ENCODE measurements at regions of chr6 and their contacts with region 1.

Region 1: DNA sequence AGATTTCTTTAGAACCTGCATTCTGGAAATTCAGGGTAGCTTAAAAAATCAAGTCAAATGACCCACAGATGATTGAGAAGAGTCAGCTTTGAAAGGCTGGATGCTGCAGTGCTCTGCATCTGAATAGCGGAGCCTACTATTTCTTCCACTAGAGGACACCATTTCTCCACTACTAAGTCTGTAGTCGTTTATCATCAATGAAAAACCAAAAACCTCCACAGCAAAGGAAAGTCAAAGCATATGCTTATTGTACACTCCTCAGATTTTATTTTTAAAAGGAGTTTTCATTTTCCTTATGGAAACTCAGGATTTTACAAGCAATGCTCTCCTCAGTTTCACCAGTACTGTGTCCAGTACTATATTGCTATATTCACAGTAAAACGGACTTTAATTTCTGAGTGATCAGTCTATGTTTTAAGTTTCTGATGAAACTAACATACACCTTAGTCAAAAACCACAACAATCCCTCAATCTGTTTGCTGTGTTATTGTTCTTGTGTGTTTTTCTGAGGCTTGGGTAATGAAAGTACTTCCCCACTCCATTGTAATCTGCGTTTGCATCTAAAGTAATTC is 50.5 kb upstream of the ENPP5 start:
- DNase-seq: peak; percentile 43
- H3K4me3 ChIP-seq: no peak overlapping the region
- H3K27ac ChIP-seq: no peak overlapping the region
- H3K4me1 ChIP-seq: no peaks in the 10 kb centered on the region
- H3K27me3 ChIP-seq: peaks cover 3 to 13% of the 10 kb centered on the region in 2 experiments
- CTCF ChIP-seq: peak; percentile 58 to 73
- POLR2A ChIP-seq: no peak

Region 2: GRCh38 chr6:46042355-46042999 is 178.8 kb before region 1 on chr6:
- CTCF ChIA-PET with region 1: interaction called, 5 read pairs
- POLR2A ChIA-PET with region 1: no interaction called
- dilution Hi-C with region 1: no loop called
- intact Hi-C with region 1: loop called (anchors 1 kb)
- DNase-seq: peak; percentile 73
- H3K4me3 ChIP-seq: no peak overlapping the region
- H3K27ac ChIP-seq: no peak overlapping the region
- H3K4me1 ChIP-seq: peaks cover 29% of the 10 kb centered on the region
- H3K27me3 ChIP-seq: no peaks in the 10 kb centered on the region
- CTCF ChIP-seq: peak; percentile 52 to 60
- POLR2A ChIP-seq: no peak

Region 3: GRCh38 chr6:46203391-46204177 is 17.7 kb before region 1 on chr6:
- CTCF ChIA-PET with region 1: interaction called, 17 read pairs
- POLR2A ChIA-PET with region 1: no interaction called
- dilution Hi-C with region 1: no loop called
- intact Hi-C with region 1: no loop called
- DNase-seq: no peak
- H3K4me3 ChIP-seq: no peak overlapping the region
- H3K27ac ChIP-seq: no peak overlapping the region
- H3K4me1 ChIP-seq: no peaks in the 10 kb centered on the region
- H3K27me3 ChIP-seq: no peaks in the 10 kb centered on the region
- CTCF ChIP-seq: no peak
- POLR2A ChIP-seq: no peak

Region 4: DNA sequence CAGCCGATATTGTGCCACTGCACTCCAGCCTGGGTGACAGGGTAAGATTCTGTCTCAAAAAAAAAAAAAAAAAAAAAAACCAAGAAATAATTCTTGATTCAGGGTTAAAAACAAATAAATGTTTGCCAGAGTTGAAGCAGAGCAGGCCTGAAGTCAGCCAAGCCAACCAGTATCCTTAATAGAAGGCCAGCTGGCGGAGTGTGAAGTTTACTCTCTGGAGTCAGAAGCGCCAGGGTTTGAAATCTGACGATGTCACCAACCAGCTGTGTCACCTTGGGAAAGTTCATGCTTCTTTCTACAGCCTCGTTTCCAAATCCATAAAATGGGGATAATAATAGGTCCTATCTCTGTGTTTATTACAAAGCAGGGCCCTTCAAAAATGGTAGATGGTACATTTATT is 22.4 kb after region 1 on chr6:
- CTCF ChIA-PET with region 1: no interaction called
- POLR2A ChIA-PET with region 1: no interaction called
- dilution Hi-C with region 1: no loop called
- intact Hi-C with region 1: no loop called
- DNase-seq: no peak
- H3K4me3 ChIP-seq: no peak overlapping the region
- H3K27ac ChIP-seq: no peak overlapping the region
- H3K4me1 ChIP-seq: no peaks in the 10 kb centered on the region
- H3K27me3 ChIP-seq: no peaks in the 10 kb centered on the region
- CTCF ChIP-seq: no peak
- POLR2A ChIP-seq: no peak

Region 5: GRCh38 chr6:46410334-46410953 is 189.1 kb after region 1 on chr6:
- CTCF ChIA-PET with region 1: interaction called, 365 read pairs
- POLR2A ChIA-PET with region 1: no interaction called
- dilution Hi-C with region 1: no loop called
- intact Hi-C with region 1: loop called (anchors 1 kb)
- DNase-seq: peak; percentile 50
- H3K4me3 ChIP-seq: no peak overlapping the region
- H3K27ac ChIP-seq: no peak overlapping the region
- H3K4me1 ChIP-seq: no peaks in the 10 kb centered on the region
- H3K27me3 ChIP-seq: peaks cover 0 to 9% of the 10 kb centered on the region in 2 experiments
- CTCF ChIP-seq: peak; percentile 40 to 43
- POLR2A ChIP-seq: no peak

Region 6: DNA sequence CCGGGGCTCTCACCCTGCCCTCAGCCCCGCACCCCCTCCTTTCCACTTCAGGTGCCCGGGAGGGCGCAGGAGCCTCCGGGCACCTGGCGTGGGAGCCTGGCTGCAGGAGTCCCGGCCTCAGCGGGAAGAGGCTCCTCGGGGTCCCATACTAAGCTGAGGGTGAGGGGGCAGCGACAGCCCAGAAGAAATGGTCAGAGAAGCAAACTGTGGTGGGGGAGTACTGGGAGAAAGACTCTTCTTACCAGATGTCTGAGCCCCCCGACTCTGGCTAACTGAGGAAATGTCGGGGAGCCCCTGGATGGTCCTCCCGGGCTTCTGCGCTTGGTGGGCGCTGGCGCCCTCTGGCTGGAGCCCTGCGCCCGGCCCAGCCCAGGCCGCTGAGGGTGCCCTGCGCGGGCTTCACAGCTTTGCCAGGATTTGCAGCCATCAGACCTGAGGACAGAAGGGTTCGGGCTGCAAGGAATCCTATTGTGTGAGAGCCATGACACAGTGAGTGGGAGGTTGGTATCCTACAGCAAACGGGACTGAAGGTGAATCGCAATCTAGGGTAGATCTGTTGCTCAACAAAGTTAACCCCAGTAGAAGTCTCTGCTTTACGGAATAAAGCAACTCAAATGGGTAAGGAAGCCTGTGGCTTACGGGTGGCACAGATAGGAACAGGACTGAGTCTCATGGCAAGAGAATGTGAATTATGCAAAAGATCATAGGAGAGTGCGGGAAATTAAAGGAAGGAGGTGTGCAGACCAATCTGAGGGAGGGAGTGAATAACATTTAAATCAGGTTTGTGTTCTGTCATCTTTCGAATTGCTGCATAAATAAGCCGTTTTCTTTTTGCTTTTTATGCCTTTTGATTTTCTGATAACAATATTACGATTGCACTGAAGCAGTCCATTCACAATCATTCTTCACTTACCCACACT is 270.6 kb after region 1 on chr6:
- CTCF ChIA-PET with region 1: no interaction called
- POLR2A ChIA-PET with region 1: no interaction called
- dilution Hi-C with region 1: no loop called
- intact Hi-C with region 1: loop called (anchors 1 kb)
- DNase-seq: peak; percentile 12
- H3K4me3 ChIP-seq: peak overlapping the region; percentile 14 to 42 (median 40)
- H3K27ac ChIP-seq: no peak overlapping the region
- H3K4me1 ChIP-seq: peaks cover 8% of the 10 kb centered on the region
- H3K27me3 ChIP-seq: peaks cover 29 to 50% of the 10 kb centered on the region in 2 experiments
- CTCF ChIP-seq: peak; percentile 27 to 42
- POLR2A ChIP-seq: no peak

Region 7: DNA sequence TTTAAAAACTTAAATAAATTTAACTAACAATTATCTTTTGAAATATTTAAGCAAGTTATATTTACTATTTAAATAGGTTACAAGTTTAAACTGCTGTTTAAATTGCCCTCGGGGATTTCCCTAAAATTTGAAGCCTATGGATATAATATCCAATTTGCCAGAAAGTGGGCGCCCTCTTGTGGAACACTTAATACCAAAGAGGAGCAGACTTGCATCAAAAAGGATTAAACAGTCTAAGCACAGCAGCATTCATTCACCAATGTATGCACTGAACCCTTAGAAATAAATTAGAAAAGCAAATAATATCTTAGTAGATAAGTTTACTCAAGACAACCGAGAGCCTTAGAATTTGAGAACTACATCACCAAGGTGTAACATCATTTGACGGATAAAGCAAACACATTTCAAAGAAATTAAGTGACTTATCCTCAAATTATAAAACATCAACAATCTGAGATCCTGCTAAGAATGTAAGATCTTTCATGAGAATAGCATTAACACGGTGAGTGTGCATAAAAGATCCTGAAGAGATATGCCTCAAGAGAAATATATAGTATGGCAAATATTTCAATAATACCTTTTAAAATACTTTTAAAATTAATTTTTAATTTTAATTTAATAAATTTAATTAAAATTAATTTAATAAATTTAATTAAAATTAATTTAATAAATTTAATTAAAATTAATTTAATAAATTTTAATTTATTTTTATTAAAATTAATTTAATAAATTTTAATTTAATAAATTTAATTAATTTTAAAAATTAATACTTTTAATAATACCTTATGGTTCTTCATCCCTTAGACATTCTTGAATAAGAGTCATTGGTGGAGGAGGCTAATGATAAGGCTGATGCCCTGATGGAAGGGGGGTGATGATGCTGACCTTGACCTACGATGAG is 560.4 kb after region 1 on chr6:
- CTCF ChIA-PET with region 1: no interaction called
- POLR2A ChIA-PET with region 1: no interaction called
- dilution Hi-C with region 1: no loop called
- intact Hi-C with region 1: loop called (anchors 1 kb)
- DNase-seq: peak; percentile 63
- H3K4me3 ChIP-seq: no peak overlapping the region
- H3K27ac ChIP-seq: no peak overlapping the region
- H3K4me1 ChIP-seq: no peaks in the 10 kb centered on the region
- H3K27me3 ChIP-seq: peaks cover 0 to 4% of the 10 kb centered on the region in 2 experiments
- CTCF ChIP-seq: peak; percentile 50 to 60
- POLR2A ChIP-seq: no peak